Naive thymus-derived CD8-positive, alpha-beta T cell (primary cell): ENCODE measurements at regions of chr14 and their contacts with region 1.

Region 1: DNA sequence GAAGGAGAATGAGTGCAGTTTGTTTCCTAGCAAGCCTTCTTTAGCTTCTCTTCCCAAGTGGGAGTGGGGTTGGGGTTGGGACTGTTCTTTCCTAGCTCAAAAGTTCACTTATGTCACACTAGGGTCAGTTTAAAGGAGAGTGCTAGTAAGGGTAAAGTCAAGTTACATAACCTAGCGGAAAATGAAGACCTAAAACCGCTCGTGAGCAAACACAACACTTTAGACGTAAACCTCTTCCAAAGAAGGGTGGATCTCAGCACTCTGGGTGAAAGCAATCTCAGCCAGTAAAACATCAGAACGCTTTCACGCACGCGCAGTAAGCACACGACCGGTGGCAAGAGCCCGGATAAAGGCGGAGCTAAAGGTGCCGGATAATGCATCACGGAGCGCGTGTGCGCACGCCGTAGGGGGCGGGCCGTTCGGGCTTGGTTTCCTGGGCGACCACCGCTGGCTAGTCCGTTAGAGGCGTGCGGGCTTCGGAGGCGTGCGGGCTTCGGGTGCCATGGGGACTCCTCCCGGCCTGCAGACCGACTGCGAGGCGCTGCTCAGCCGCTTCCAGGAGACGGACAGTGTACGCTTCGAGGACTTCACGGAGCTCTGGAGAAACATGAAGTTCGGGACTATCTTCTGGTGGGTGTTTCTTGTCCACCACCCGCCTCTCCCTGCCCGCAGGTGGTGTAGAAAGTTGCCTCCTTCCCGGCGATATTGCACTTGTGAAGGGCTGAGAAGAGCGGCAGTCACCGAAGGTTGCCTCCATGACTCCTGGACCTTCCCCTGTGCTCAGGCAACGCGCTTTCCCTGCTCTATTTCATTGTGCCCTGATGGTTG is at the start of gene SNAPC1:
- DNase-seq: peak; percentile 94 to 99 (median 98)
- ATAC-seq: peak; percentile 94
- H3K4me3 Mint-ChIP-seq: peak within 1 kb of the TSS; percentile 95 to 100 (median 98)
- H3K27ac Mint-ChIP-seq: peak within 1 kb of the TSS; percentile 99 to 100 (median 100)
- H3K4me1 Mint-ChIP-seq: peaks cover 27 to 54% (median 46%) of the 10 kb centered on the region in 4 donors
- H3K27me3 Mint-ChIP-seq: peaks cover 0 to 2% (median 0%) of the 10 kb centered on the region in 5 donors
- polyA plus RNA-seq, gene SNAPC1: 4.1 to 5.6 (median 4.8) TPM

Region 2: DNA sequence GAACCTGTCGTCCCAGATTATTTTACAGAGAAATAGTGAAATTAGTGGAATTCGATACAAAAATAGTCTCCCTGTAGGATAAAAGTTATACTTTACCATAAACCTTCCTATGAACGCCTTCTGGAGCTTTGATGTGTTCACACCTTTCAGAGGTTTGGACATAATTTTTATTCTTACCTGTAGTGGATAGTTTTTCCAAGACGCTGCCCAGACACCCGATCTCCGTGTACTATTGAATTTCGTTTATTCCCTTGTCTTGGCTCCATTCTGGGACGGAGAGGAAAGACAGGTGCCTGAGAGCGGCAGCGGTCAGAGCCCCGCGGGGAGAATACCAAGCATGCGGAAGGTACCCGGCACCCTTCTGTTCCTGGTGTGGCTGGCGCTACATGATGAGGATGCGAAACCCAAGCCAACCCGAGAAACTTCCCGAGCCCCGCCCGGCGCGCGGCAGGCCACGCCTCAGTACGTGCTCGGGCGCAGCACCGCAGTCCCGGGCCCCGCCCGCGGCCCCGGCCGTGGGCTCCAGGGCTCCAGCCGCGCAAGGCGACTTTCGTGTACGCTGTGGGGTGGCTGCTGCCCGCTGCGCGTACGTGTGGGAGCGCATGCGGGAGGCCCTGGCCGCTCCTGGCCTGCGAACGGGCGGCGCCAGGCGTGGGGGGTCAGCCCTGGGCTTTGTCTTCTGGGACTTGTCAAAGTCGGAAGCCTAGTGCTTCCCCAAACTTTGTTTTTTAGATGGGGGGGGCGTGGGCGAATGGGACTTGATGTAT is 11.3 kb before region 1 on chr14:
- POLR2A ChIA-PET with region 1: interaction called, 20 read pairs
- DNase-seq: peak; percentile 64 to 82 (median 70)
- ATAC-seq: peak; percentile 93 to 95
- H3K4me3 Mint-ChIP-seq: peak overlapping the region; percentile 85 to 91 (median 88)
- H3K27ac Mint-ChIP-seq: peak overlapping the region; percentile 43 to 94 (median 85)
- H3K4me1 Mint-ChIP-seq: peaks cover 6 to 29% (median 11%) of the 10 kb centered on the region in 4 donors
- H3K27me3 Mint-ChIP-seq: peaks cover 0 to 5% (median 2%) of the 10 kb centered on the region in 5 donors